ENCODE measurements at regions of chr1 and their contacts with region 1.

Region 1: DNA sequence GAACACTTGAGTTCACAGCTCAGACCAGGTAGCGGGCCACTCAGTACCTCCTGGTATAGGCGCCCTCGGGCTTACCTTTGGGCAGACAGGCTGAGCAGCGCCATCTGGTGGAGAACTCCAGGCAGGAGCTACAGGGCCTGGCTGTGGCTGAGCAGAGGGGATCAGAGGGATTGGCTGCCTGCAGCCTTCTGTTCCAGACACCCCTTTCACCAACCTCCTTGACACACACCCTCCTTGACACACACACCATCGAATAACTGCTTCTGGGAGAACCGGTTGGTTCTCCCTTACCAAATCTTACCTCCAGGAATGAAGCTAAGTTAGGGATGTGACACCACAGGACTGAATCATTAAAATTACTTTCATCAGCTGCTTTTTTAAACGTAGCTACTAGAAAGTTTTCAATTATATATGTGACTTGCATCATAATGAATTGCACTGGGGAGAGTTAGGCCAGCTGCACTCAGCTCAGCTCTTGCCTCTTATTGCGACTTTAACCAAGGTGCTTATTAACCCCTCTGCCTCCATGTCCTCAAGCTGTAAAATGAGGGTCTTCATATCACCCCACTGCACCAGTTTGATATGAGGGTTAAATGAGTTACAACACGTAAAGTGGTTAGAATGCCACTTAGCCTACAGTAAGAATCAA is 6.6 kb downstream of the LIN28A start:
- DNase-seq: peak; percentile 85
- CTCF ChIP-seq: peak; percentile 99

Region 2: GRCh38 chr1:26279456-26280332 is 137.5 kb before region 1 on chr1 and contains the start of gene SH3BGRL3:
- CTCF ChIA-PET with region 1: interaction called, 52 read pairs
- POLR2A ChIA-PET with region 1: no interaction called
- DNase-seq: peak; percentile 95
- CTCF ChIP-seq: peak; percentile 47

Region 3: DNA sequence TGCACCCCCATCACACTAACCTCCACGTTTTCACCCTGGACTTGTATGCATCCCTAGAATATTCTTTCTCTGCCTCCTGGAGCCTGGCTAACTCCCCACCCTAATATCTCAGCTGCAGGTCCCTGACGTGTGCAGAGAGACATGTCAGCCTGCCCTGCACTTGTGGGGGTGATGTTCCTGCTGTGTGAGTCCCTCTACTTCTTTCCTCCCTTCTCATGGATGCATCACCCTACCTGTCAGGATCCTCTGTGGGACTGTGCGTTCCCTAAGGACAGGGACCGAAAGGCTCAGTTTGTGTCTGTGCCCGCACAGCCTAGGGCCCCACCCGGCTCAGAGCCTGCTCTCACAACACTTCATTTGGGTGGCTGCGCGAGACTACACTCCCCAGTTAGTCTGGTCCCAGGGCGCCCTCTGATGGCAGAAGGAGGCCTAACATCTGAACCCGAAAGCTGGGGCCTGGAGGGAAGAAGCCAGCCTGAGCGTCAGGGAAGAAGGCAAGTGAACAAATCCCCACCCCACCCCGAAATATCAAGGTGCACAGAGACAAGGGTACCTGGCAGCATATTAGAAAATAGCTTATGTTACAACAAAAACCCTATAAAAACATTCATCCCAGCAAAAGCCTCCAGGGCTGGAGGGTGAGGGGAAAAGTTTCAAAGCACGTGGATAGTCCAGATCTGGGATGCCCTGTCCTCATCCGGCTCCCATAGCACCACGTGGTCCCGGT is 95.8 kb before region 1 on chr1:
- CTCF ChIA-PET with region 1: interaction called, 12 read pairs
- POLR2A ChIA-PET with region 1: no interaction called
- DNase-seq: peak; percentile 87
- CTCF ChIP-seq: peak; percentile 96

Region 4: DNA sequence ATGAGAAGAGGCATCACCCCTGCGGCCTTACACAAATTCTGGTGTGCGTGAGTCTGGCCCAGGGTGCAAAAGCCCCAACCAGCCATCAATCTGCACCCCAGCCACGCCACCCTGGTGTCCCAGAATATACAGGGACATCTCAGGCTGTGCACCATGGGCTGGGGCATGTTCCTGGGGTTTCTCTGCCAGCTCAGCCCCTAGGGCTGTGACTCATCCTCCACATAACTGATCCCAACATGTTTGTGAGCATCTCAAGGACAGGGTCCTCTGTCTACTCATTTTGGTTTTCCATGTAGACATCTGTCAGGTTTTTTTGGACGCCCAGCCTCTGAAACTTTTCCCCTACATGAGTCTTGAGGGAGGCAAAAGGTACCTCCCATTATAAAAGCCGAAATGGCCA is 45.2 kb before region 1 on chr1:
- CTCF ChIA-PET with region 1: interaction called, 21 read pairs
- POLR2A ChIA-PET with region 1: no interaction called
- DNase-seq: no peak
- CTCF ChIP-seq: no peak

Region 5: DNA sequence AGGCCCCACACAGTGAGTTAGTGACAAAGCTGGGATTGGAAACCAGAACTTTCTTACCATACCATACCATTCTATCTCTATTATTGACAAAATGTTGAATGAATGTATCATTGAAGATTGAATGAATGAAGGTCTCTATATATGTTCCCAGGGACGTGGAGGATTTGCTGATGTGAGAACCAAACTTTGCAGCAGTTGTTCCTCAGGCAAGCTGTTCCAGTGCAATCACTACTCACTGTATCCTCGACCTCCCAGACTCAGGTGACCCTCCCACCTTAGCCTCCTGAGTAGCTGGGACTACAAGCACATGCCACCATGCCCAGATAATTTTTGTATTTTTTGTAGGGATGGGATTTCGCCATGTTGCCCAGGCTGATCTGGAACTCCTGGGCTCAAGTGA is 18.2 kb before region 1 on chr1:
- CTCF ChIA-PET with region 1: interaction called, 42 read pairs
- POLR2A ChIA-PET with region 1: no interaction called
- DNase-seq: no peak
- CTCF ChIP-seq: no peak

Region 6: DNA sequence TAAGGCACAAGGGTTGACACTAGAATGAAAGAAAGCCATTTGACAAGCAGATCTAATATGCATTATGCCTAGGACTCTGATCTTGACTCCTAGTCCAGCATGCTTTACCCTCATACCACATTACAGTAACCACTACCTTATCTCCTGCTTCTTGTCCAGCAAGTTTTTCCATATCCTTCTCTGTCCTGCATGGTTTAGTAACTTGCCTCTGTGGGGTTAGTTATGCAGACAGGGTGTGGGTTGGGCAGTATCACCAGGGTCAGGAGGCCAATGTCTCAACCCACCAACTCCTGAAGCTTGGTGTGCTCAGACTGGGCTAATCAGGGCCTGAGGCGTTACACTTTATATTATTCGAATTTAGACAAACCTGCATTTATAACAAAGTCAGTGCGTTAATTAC is 33.7 kb after region 1 on chr1:
- CTCF ChIA-PET with region 1: interaction called, 15 read pairs
- POLR2A ChIA-PET with region 1: no interaction called
- DNase-seq: no peak
- CTCF ChIP-seq: no peak